ENCODE measurements at regions of chr12 and their contacts with region 1.

Region 1: GRCh38 chr12:45170456-45171042 is 45.3 kb upstream of the ANO6 start:
- DNase-seq: peak; percentile 44
- H3K4me3 ChIP-seq: no peak overlapping the region
- H3K27ac ChIP-seq: no peak overlapping the region
- H3K4me1 ChIP-seq: no peaks in the 10 kb centered on the region
- H3K27me3 ChIP-seq: no peaks in the 10 kb centered on the region
- CTCF ChIP-seq: peak; percentile 95

Region 2: GRCh38 chr12:45315462-45315861 is 144.9 kb after region 1 on chr12:
- CTCF ChIA-PET with region 1: no interaction called
- dilution Hi-C with region 1: no loop called
- in situ Hi-C with region 1: no loop called
- intact Hi-C with region 1: no loop called
- DNase-seq: no peak
- H3K4me3 ChIP-seq: no peak overlapping the region
- H3K27ac ChIP-seq: no peak overlapping the region
- H3K4me1 ChIP-seq: no peaks in the 10 kb centered on the region
- H3K27me3 ChIP-seq: no peaks in the 10 kb centered on the region
- CTCF ChIP-seq: no peak

Region 3: GRCh38 chr12:45388545-45388944 is 218.0 kb after region 1 on chr12:
- CTCF ChIA-PET with region 1: no interaction called
- dilution Hi-C with region 1: no loop called
- in situ Hi-C with region 1: loop called in 1 of 2 experiments (anchors 10 kb)
- intact Hi-C with region 1: loop called (anchors 1 kb)
- DNase-seq: peak; percentile 16
- H3K4me3 ChIP-seq: no peak overlapping the region
- H3K27ac ChIP-seq: no peak overlapping the region
- H3K4me1 ChIP-seq: no peaks in the 10 kb centered on the region
- H3K27me3 ChIP-seq: no peaks in the 10 kb centered on the region
- CTCF ChIP-seq: peak; percentile 49 to 65

Region 4: DNA sequence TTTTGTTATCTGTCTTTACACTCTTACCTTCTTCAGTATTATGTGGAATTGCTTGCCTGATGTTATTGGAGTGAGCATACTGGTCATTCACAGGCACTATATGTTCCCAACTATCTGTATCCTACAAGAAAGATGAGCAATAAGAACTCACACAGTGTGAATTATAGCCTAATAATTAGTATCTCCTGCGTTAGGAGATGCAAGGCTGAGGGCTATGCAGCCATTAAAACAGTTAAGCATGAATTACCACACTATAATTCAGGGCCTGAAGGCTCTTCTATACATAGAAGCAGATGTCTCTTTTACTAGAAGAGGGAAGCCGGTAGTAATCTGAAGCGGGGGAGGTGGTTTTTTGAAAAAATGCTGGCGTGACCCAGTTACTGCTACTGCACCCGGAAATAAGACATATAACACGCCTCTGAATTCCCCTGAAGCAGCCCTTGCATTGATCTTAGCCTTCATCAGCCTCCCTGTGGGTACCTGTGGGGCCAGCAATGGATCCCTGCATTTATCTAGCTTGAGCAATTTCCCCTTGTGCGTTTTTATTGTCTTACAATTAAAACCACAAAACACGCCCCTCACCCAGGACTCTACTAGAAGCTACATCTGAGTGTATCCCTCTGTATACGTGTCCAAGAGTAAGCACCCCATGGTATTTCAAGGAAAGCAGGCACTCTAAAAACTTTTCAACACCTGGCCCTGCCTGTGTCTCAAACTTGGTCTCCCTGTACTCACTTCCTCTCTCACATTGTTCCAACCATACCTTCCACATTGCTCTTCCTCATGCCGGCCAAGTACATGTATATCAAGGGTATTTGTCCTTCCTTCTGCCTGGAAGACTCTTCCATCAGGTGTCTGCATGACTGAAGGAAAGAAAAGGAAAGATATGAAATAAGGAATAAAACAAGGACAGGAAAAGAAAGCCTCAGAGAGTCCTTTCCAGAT is 348.0 kb after region 1 on chr12:
- CTCF ChIA-PET with region 1: no interaction called
- dilution Hi-C with region 1: no loop called
- in situ Hi-C with region 1: loop called in 1 of 2 experiments (anchors 25 kb)
- intact Hi-C with region 1: no loop called
- DNase-seq: no peak
- H3K4me3 ChIP-seq: no peak overlapping the region
- H3K27ac ChIP-seq: no peak overlapping the region
- H3K4me1 ChIP-seq: no peaks in the 10 kb centered on the region
- H3K27me3 ChIP-seq: no peaks in the 10 kb centered on the region
- CTCF ChIP-seq: no peak

Region 5: GRCh38 chr12:45543906-45544315 is 373.4 kb after region 1 on chr12:
- CTCF ChIA-PET with region 1: interaction called, 15 read pairs
- dilution Hi-C with region 1: no loop called
- in situ Hi-C with region 1: no loop called
- intact Hi-C with region 1: loop called (anchors 5 kb)
- DNase-seq: peak; percentile 55
- H3K4me3 ChIP-seq: no peak overlapping the region
- H3K27ac ChIP-seq: no peak overlapping the region
- H3K4me1 ChIP-seq: no peaks in the 10 kb centered on the region
- H3K27me3 ChIP-seq: no peaks in the 10 kb centered on the region
- CTCF ChIP-seq: peak; percentile 77 to 88

Region 6: GRCh38 chr12:46005151-46005797 is 834.7 kb after region 1 on chr12:
- CTCF ChIA-PET with region 1: no interaction called
- dilution Hi-C with region 1: no loop called
- in situ Hi-C with region 1: no loop called
- intact Hi-C with region 1: loop called (anchors 2 kb)
- DNase-seq: no peak
- H3K4me3 ChIP-seq: no peak overlapping the region
- H3K27ac ChIP-seq: no peak overlapping the region
- H3K4me1 ChIP-seq: no peaks in the 10 kb centered on the region
- H3K27me3 ChIP-seq: no peaks in the 10 kb centered on the region
- CTCF ChIP-seq: peak; percentile 35 to 41